ENCODE measurements at regions of chr5 and their contacts with region 1.

Region 1: GRCh38 chr5:141564216-141564692 is 54.5 kb downstream of the DIAPH1 start:
- DNase-seq: peak; percentile 93
- H3K4me3 ChIP-seq: no peak overlapping the region
- H3K27ac ChIP-seq: peak overlapping the region; percentile 68
- H3K4me1 ChIP-seq: peaks cover 25% of the 10 kb centered on the region
- H3K27me3 ChIP-seq: no peaks in the 10 kb centered on the region

Region 2: DNA sequence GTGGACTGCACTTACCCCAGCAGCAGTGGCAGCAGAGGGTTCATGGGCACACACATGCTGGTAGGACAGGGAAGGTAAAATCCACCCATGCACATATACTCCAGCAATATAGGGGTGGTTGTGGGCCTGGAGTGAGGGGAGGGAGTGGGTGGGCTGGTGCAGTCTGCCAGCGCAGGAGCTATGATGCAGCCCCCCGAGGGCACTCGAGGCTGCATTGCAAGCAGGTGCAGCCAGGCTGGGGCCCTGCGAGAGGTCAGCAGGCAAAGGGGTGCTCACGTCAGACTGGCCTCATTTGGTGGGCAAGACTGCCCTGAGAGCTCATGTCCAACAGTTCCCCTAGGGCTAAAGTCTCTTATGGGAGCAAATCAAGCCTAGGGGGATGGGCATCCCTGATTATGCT is 810.7 kb before region 1 on chr5:
- in situ Hi-C with region 1: no loop called
- DNase-seq: no peak
- H3K4me3 ChIP-seq: no peak overlapping the region
- H3K27ac ChIP-seq: no peak overlapping the region
- H3K4me1 ChIP-seq: no peaks in the 10 kb centered on the region
- H3K27me3 ChIP-seq: no peaks in the 10 kb centered on the region

Region 3: GRCh38 chr5:141186897-141187512 is 377.2 kb before region 1 on chr5 and contains the start of gene PCDHB9:
- in situ Hi-C with region 1: loop called (anchors 10 kb)
- DNase-seq: peak; percentile 77
- H3K4me3 ChIP-seq: peak within 1 kb of the TSS; percentile 67
- H3K27ac ChIP-seq: no peak within 1 kb of the TSS
- H3K4me1 ChIP-seq: no peaks in the 10 kb centered on the region
- H3K27me3 ChIP-seq: no peaks in the 10 kb centered on the region
- total RNA-seq, gene PCDHB9: 1.5 and 2.5 TPM in 2 replicates

Region 4: GRCh38 chr5:141330299-141331080 is 233.8 kb before region 1 on chr5 and contains the start of gene PCDHGA1:
- in situ Hi-C with region 1: loop called (anchors 10 kb)
- DNase-seq: peak; percentile 86
- H3K4me3 ChIP-seq: peak within 1 kb of the TSS; percentile 80
- H3K27ac ChIP-seq: peak within 1 kb of the TSS; percentile 46
- H3K4me1 ChIP-seq: no peaks in the 10 kb centered on the region
- H3K27me3 ChIP-seq: no peaks in the 10 kb centered on the region
- total RNA-seq, gene PCDHGA1: 0.38 and 1.8 TPM in 2 replicates

Region 5: GRCh38 chr5:141419074-141419880 is 145.0 kb before region 1 on chr5:
- in situ Hi-C with region 1: loop called (anchors 5 kb)
- DNase-seq: no peak
- H3K4me3 ChIP-seq: no peak overlapping the region; the same call in 1 of the 2 replicates
- H3K27ac ChIP-seq: no peak overlapping the region
- H3K4me1 ChIP-seq: peaks cover 17% of the 10 kb centered on the region; the same call in 1 of the 2 replicates
- H3K27me3 ChIP-seq: no peaks in the 10 kb centered on the region